Panc1 (cell line): ENCODE measurements at regions of chr6 and their contacts with region 1.

Region 1: GRCh38 chr6:32212076-32212760 is 11.6 kb downstream of the NOTCH4 start:
- DNase-seq: no peak
- ATAC-seq: no peak
- H3K4me3 ChIP-seq: no peak overlapping the region
- H3K27ac ChIP-seq: no peak overlapping the region
- H3K4me1 ChIP-seq: no peaks in the 10 kb centered on the region
- H3K27me3 ChIP-seq: no peaks in the 10 kb centered on the region
- CTCF ChIP-seq: no peak

Region 2: DNA sequence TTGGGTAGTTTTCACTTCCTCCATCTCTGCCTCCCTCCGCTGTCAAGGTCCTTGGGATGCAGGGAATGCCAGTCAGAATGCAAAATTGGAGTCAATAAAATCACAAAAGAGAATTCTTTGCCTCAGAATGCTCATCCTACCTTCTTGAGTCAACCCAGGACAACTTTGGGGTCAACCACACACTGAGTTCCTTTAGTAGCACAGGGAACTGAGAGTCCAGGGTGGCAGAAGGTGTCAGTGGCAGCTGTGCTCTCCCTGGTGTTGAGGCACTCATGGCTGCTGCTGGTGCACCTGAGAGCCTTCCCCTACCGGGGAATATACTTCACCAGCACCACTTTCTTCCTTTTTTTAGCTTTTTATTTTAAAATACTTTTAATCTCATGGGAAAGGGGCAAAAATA is 12.5 kb after region 1 on chr6:
- CTCF ChIA-PET with region 1: no interaction called
- POLR2A ChIA-PET with region 1: interaction called, 21 read pairs
- in situ Hi-C with region 1: no loop called
- intact Hi-C with region 1: no loop called
- DNase-seq: no peak
- ATAC-seq: no peak
- H3K4me3 ChIP-seq: no peak overlapping the region
- H3K27ac ChIP-seq: no peak overlapping the region
- H3K4me1 ChIP-seq: no peaks in the 10 kb centered on the region
- H3K27me3 ChIP-seq: no peaks in the 10 kb centered on the region
- CTCF ChIP-seq: no peak